MCF 10A (cell line): ENCODE measurements at regions of chr1 and their contacts with region 1.

Region 1: GRCh38 chr1:232467073-232467760 is 162.7 kb downstream of the SIPA1L2 start:
- DNase-seq: no peak
- H3K4me3 Mint-ChIP-seq: no peak overlapping the region
- H3K27ac Mint-ChIP-seq: no peak overlapping the region
- H3K4me1 Mint-ChIP-seq: peaks cover 11% of the 10 kb centered on the region
- H3K27me3 Mint-ChIP-seq: no peaks in the 10 kb centered on the region
- CTCF ChIP-seq: no peak

Region 2: GRCh38 chr1:232452117-232452516 is 15.1 kb before region 1 on chr1:
- CTCF ChIA-PET with region 1: interaction called, 11 read pairs
- POLR2A ChIA-PET with region 1: interaction called, 5 read pairs
- intact Hi-C with region 1: no loop called
- DNase-seq: no peak
- H3K4me3 Mint-ChIP-seq: no peak overlapping the region
- H3K27ac Mint-ChIP-seq: no peak overlapping the region
- H3K4me1 Mint-ChIP-seq: peaks cover 8% of the 10 kb centered on the region
- H3K27me3 Mint-ChIP-seq: no peaks in the 10 kb centered on the region
- CTCF ChIP-seq: no peak